ENCODE measurements at regions of chr18 and their contacts with region 1.

Region 1: DNA sequence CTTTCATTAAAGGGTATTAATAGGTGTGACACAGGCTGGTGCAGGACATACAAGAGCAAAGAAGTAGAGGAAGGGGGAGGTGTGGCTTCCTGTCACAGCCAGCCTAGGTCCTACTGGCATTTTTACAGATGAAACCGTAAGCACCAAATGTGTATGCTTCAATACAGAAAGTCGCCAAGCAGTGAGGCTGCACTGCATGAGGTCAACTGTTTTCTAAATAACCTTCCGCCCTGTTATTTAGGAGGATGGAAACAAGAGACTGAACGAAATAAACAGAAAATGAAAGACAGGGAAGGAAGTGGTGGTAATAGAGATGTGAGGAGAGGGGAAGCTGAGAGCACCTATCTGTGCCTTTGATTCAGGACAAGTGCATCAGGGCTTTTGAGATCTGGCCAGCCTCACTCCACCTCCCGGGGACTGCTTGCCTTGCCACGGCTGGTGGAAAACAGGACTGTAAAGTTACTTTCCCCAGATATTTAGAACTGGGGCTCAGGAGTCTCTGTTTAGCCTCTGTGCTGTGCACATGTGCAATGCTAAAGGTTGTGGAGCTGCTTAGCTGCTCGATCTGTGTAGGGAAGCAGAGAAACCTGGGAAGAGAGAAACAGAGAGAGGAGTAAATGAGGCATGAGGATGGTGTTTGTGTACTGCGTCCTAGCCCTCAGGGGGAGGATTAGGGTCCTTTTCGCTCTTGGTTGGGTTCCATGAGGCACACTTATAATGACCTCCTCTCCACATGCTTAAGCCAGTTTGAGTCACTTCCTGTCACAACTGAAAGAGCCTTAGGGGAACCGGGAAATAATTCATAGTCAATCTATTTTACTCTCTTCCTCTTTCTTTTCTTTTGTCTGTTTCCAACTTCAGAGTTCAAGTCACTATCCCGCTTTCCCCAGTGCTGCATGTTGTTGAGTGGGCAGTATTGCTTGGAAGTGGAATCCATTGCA is 62.3 kb upstream of the BOD1L2 start:
- DNase-seq: peak; percentile 13
- H3K4me3 Mint-ChIP-seq: peak overlapping the region; percentile 34
- H3K27ac Mint-ChIP-seq: peak overlapping the region; percentile 28
- H3K4me1 Mint-ChIP-seq: peaks cover 58% of the 10 kb centered on the region
- H3K27me3 Mint-ChIP-seq: no peaks in the 10 kb centered on the region
- CTCF ChIP-seq: no peak

Region 2: DNA sequence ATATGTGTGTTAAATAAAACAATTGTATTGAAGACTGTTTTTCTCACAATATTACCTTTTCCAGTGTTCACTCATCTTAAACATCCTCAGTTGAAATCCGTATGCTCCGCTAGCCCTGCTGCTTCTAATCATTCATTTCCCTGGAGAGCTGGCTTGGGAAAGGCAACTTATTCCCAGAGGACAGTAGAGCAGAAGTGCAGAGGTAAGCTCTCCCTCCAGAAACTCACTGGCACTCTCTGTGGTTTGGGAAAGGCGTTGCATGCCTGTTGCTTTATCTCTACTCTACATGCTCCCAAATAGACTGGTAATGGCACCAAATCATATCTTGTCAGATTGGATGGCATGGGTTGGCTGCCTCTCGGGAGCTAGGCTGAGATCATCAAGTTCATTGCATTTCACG is 54.8 kb before region 1 on chr18:
- CTCF ChIA-PET with region 1: no interaction called
- intact Hi-C with region 1: no loop called
- DNase-seq: peak; percentile 8
- H3K4me3 Mint-ChIP-seq: no peak overlapping the region
- H3K27ac Mint-ChIP-seq: no peak overlapping the region
- H3K4me1 Mint-ChIP-seq: peaks cover 12% of the 10 kb centered on the region
- H3K27me3 Mint-ChIP-seq: no peaks in the 10 kb centered on the region
- CTCF ChIP-seq: no peak

Region 3: GRCh38 chr18:57276739-57277298 is 192.2 kb after region 1 on chr18:
- CTCF ChIA-PET with region 1: no interaction called
- intact Hi-C with region 1: no loop called
- DNase-seq: no peak
- H3K4me3 Mint-ChIP-seq: no peak overlapping the region
- H3K27ac Mint-ChIP-seq: no peak overlapping the region
- H3K4me1 Mint-ChIP-seq: peaks cover 58% of the 10 kb centered on the region
- H3K27me3 Mint-ChIP-seq: no peaks in the 10 kb centered on the region
- CTCF ChIP-seq: no peak

Region 4: DNA sequence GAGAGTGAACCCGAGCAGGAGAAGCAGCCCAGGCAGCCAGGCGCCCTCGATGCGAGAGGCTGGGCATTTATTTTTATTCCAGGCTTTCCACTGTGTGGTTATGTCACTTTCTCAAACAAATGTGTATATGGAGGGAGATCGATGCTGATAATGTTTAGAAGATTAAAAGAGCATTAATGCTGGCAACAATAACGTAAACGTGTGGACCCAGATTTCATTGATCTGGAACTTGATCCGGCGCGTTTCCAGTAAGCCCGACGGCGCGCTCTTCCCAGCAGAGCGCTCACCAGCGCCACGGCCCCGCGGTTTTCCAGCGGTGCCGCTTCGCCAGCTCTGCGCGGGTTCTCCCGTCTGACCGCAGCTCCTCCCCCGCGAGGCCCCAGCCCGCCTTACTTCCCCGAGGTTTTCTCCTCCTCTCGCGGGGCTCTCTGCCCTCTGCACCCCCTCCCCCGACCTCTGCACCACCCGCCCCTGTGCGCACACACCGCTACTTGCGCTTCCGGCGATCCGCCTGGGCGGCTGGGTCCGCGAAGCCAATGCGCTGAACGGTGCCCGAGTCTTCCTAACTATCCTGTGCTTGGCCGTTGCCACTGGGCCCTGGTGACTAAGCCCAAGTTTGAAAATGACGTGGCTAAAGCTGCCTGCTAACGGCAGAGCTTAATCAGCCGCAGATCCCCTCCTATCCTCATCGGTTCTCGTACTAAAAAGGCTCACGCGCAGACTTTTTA is 356.6 kb after region 1 on chr18:
- CTCF ChIA-PET with region 1: no interaction called
- intact Hi-C with region 1: loop called (anchors 5 kb)
- DNase-seq: peak; percentile 77
- H3K4me3 Mint-ChIP-seq: peak overlapping the region; percentile 96
- H3K27ac Mint-ChIP-seq: peak overlapping the region; percentile 79
- H3K4me1 Mint-ChIP-seq: peaks cover 51% of the 10 kb centered on the region
- H3K27me3 Mint-ChIP-seq: no peaks in the 10 kb centered on the region
- CTCF ChIP-seq: no peak